ENCODE measurements at regions of chr3 and their contacts with region 1.

Region 1: GRCh38 chr3:44338010-44338827 is at the start of gene TCAIM:
- DNase-seq: peak; percentile 98 to 100 (median 99)
- ATAC-seq: peak; percentile 92
- H3K4me3 ChIP-seq: peak within 1 kb of the TSS; percentile 69
- H3K4me3 Mint-ChIP-seq: peak within 1 kb of the TSS; percentile 93
- H3K27ac ChIP-seq: peak within 1 kb of the TSS; percentile 91 to 92
- H3K27ac Mint-ChIP-seq: peak within 1 kb of the TSS; percentile 95
- H3K4me1 ChIP-seq: peaks cover 17% of the 10 kb centered on the region
- H3K4me1 Mint-ChIP-seq: peaks cover 32% of the 10 kb centered on the region
- H3K27me3 ChIP-seq: no peaks in the 10 kb centered on the region
- H3K27me3 Mint-ChIP-seq: peaks cover 12% of the 10 kb centered on the region
- CTCF ChIP-seq: no peak
- total RNA-seq, gene TCAIM: 2.9 to 4.2 TPM

Region 2: GRCh38 chr3:43621656-43622432 is 716.4 kb before region 1 on chr3 and contains the start of gene ANO10:
- CTCF ChIA-PET with region 1: no interaction called
- POLR2A ChIA-PET with region 1: no interaction called
- intact Hi-C with region 1: loop called in 1 of 2 experiments (anchors 5 kb)
- DNase-seq: peak; percentile 87 to 98 (median 93)
- ATAC-seq: peak; percentile 92
- H3K4me3 ChIP-seq: peak within 1 kb of the TSS; percentile 68
- H3K4me3 Mint-ChIP-seq: peak within 1 kb of the TSS; percentile 90
- H3K27ac ChIP-seq: peak within 1 kb of the TSS in 1 of 2 donors; percentile 23
- H3K27ac Mint-ChIP-seq: peak within 1 kb of the TSS; percentile 82
- H3K4me1 ChIP-seq: peaks cover 16% of the 10 kb centered on the region
- H3K4me1 Mint-ChIP-seq: peaks cover 21% of the 10 kb centered on the region
- H3K27me3 ChIP-seq: no peaks in the 10 kb centered on the region
- H3K27me3 Mint-ChIP-seq: no peaks in the 10 kb centered on the region
- CTCF ChIP-seq: no peak
- total RNA-seq, gene ANO10: 6.9 to 8.0 TPM

Region 3: DNA sequence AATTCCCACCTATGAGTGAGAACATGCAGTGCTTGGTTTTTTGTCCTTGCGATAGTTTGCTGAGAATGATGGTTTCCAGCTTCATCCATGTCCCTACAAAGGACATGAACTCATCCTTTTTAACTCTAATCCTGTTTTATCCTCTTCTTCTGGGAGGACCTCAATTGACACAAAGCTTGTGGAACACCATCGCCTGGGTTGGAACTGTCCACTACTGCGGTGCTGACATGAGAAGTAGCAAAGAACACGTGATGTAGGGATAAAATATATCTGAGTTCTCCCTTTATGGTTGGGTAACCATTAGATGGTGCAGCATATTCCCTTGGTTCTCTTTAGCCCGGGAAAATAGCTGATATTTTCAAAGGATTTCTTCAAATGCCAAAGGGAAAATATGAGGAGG is 201.8 kb before region 1 on chr3:
- CTCF ChIA-PET with region 1: no interaction called
- POLR2A ChIA-PET with region 1: no interaction called
- intact Hi-C with region 1: no loop called
- DNase-seq: no peak
- ATAC-seq: no peak
- H3K4me3 ChIP-seq: no peak overlapping the region
- H3K4me3 Mint-ChIP-seq: no peak overlapping the region
- H3K27ac ChIP-seq: no peak overlapping the region
- H3K27ac Mint-ChIP-seq: no peak overlapping the region
- H3K4me1 ChIP-seq: no peaks in the 10 kb centered on the region
- H3K4me1 Mint-ChIP-seq: no peaks in the 10 kb centered on the region
- H3K27me3 ChIP-seq: peaks cover 0 to 4% of the 10 kb centered on the region in 2 experiments
- H3K27me3 Mint-ChIP-seq: peaks cover 33% of the 10 kb centered on the region
- CTCF ChIP-seq: no peak

Region 4: DNA sequence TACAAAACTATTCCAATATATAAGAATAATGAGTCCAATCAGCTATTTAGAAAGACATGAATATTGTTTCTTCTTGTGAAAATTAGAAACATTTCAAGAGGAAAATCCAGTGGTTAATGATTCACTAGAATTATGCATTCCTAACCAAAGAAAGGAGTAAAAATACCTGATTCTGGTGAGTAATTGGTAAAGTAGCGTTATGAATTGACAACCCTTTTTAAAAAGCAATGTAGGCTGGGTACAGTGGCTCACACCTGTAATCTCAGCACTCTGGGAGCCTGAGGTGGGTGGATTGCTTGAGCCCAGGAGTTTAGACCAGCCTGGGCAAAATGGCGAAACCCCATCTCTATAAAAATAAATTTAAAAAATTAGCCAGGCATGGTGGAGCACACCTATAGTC is 53.3 kb before region 1 on chr3:
- CTCF ChIA-PET with region 1: no interaction called
- POLR2A ChIA-PET with region 1: no interaction called
- intact Hi-C with region 1: no loop called
- DNase-seq: no peak
- ATAC-seq: no peak
- H3K4me3 ChIP-seq: no peak overlapping the region
- H3K4me3 Mint-ChIP-seq: no peak overlapping the region
- H3K27ac ChIP-seq: no peak overlapping the region
- H3K27ac Mint-ChIP-seq: no peak overlapping the region
- H3K4me1 ChIP-seq: no peaks in the 10 kb centered on the region
- H3K4me1 Mint-ChIP-seq: no peaks in the 10 kb centered on the region
- H3K27me3 ChIP-seq: peaks cover 5 to 10% of the 10 kb centered on the region in 2 experiments
- H3K27me3 Mint-ChIP-seq: peaks cover 7% of the 10 kb centered on the region
- CTCF ChIP-seq: no peak

Region 5: GRCh38 chr3:44387404-44387803 is 49.2 kb after region 1 on chr3:
- CTCF ChIA-PET with region 1: no interaction called
- POLR2A ChIA-PET with region 1: no interaction called
- intact Hi-C with region 1: no loop called
- DNase-seq: no peak
- ATAC-seq: no peak
- H3K4me3 ChIP-seq: no peak overlapping the region
- H3K4me3 Mint-ChIP-seq: no peak overlapping the region
- H3K27ac ChIP-seq: no peak overlapping the region
- H3K27ac Mint-ChIP-seq: no peak overlapping the region
- H3K4me1 ChIP-seq: no peaks in the 10 kb centered on the region
- H3K4me1 Mint-ChIP-seq: no peaks in the 10 kb centered on the region
- H3K27me3 ChIP-seq: no peaks in the 10 kb centered on the region
- H3K27me3 Mint-ChIP-seq: no peaks in the 10 kb centered on the region
- CTCF ChIP-seq: no peak

Region 6: DNA sequence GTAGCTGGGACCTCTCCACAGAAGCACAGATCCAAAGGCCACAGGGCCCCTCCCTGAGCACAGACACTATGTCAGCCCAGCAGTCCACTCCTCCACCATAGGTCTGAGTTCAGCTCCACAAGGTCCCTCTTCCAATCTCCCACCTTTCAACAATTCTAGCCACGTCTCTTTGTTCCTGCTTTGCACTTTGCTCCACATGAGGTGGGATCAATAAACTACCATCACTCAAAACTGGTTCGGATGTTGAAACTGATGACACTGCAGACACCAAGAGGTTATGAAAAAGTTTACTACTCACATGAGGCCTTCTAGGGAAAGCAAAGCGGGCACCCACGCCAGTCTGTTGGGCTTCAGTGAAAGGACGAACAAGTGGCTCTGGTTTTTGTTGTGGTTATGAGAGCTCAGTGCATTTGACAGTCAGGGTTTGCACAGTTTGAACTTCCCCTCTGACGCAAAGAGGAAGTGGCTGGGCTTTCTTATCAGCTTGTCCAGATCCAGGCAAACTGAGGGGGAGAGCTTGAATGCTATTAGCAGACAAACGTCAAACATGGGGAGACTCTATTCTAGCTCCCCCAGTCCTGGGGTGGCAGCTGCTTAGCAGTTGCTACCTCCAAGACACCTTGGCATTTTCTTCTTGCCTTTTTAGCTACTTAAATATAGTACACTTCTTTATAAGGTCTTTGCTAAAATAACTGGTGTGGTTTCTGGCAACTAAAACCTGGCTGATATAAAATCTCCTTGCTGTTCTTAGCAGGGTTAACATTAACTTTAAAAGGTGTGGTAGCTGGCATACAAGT is 101.5 kb after region 1 on chr3:
- CTCF ChIA-PET with region 1: interaction called, 3 read pairs
- POLR2A ChIA-PET with region 1: interaction called, 16 read pairs
- intact Hi-C with region 1: no loop called
- DNase-seq: peak; percentile 10 to 88 (median 44)
- ATAC-seq: peak; percentile 81
- H3K4me3 ChIP-seq: no peak overlapping the region
- H3K4me3 Mint-ChIP-seq: peak overlapping the region; percentile 75
- H3K27ac ChIP-seq: peak overlapping the region; percentile 54 to 80
- H3K27ac Mint-ChIP-seq: peak overlapping the region; percentile 84
- H3K4me1 ChIP-seq: peaks cover 30% of the 10 kb centered on the region
- H3K4me1 Mint-ChIP-seq: peaks cover 39% of the 10 kb centered on the region
- H3K27me3 ChIP-seq: no peaks in the 10 kb centered on the region
- H3K27me3 Mint-ChIP-seq: no peaks in the 10 kb centered on the region
- CTCF ChIP-seq: no peak

Region 7: GRCh38 chr3:44510000-44510368 is 171.8 kb after region 1 on chr3:
- CTCF ChIA-PET with region 1: interaction called, 3 read pairs
- POLR2A ChIA-PET with region 1: interaction called, 42 read pairs
- intact Hi-C with region 1: loop called (anchors 2 kb)
- DNase-seq: peak in 4 of 14 experiments; percentile 14 to 44 (median 40)
- ATAC-seq: peak; percentile 25
- H3K4me3 ChIP-seq: peak overlapping the region; percentile 91
- H3K4me3 Mint-ChIP-seq: peak overlapping the region; percentile 100
- H3K27ac ChIP-seq: peak overlapping the region; percentile 74 to 79
- H3K27ac Mint-ChIP-seq: peak overlapping the region; percentile 88
- H3K4me1 ChIP-seq: peaks cover 25% of the 10 kb centered on the region
- H3K4me1 Mint-ChIP-seq: peaks cover 51% of the 10 kb centered on the region
- H3K27me3 ChIP-seq: no peaks in the 10 kb centered on the region
- H3K27me3 Mint-ChIP-seq: no peaks in the 10 kb centered on the region
- CTCF ChIP-seq: no peak

Region 8: GRCh38 chr3:44568561-44568960 is 230.3 kb after region 1 on chr3:
- CTCF ChIA-PET with region 1: no interaction called
- POLR2A ChIA-PET with region 1: no interaction called
- intact Hi-C with region 1: no loop called
- DNase-seq: no peak
- ATAC-seq: no peak
- H3K4me3 ChIP-seq: no peak overlapping the region
- H3K4me3 Mint-ChIP-seq: no peak overlapping the region
- H3K27ac ChIP-seq: no peak overlapping the region
- H3K27ac Mint-ChIP-seq: no peak overlapping the region
- H3K4me1 ChIP-seq: no peaks in the 10 kb centered on the region
- H3K4me1 Mint-ChIP-seq: no peaks in the 10 kb centered on the region
- H3K27me3 ChIP-seq: no peaks in the 10 kb centered on the region
- H3K27me3 Mint-ChIP-seq: no peaks in the 10 kb centered on the region
- CTCF ChIP-seq: no peak

Region 9: GRCh38 chr3:44761424-44762169 is 423.4 kb after region 1 on chr3 and contains the starts of genes KIAA1143 and KIF15:
- CTCF ChIA-PET with region 1: no interaction called
- POLR2A ChIA-PET with region 1: interaction called, 9 read pairs
- intact Hi-C with region 1: loop called in 1 of 2 experiments (anchors 2 kb)
- DNase-seq: peak; percentile 92 to 99 (median 96)
- ATAC-seq: peak; percentile 98
- H3K4me3 ChIP-seq: peak within 1 kb of the TSS; percentile 73
- H3K4me3 Mint-ChIP-seq: peak within 1 kb of the TSS; percentile 99
- H3K27ac ChIP-seq: peak within 1 kb of the TSS; percentile 72 to 76
- H3K27ac Mint-ChIP-seq: peak within 1 kb of the TSS; percentile 94
- H3K4me1 ChIP-seq: peaks cover 16% of the 10 kb centered on the region
- H3K4me1 Mint-ChIP-seq: peaks cover 39% of the 10 kb centered on the region
- H3K27me3 ChIP-seq: no peaks in the 10 kb centered on the region
- H3K27me3 Mint-ChIP-seq: no peaks in the 10 kb centered on the region
- CTCF ChIP-seq: no peak
- total RNA-seq, gene KIAA1143: 24.4 to 31.7 TPM
- total RNA-seq, gene KIF15: 0.08 to 0.11 TPM

Region 10: DNA sequence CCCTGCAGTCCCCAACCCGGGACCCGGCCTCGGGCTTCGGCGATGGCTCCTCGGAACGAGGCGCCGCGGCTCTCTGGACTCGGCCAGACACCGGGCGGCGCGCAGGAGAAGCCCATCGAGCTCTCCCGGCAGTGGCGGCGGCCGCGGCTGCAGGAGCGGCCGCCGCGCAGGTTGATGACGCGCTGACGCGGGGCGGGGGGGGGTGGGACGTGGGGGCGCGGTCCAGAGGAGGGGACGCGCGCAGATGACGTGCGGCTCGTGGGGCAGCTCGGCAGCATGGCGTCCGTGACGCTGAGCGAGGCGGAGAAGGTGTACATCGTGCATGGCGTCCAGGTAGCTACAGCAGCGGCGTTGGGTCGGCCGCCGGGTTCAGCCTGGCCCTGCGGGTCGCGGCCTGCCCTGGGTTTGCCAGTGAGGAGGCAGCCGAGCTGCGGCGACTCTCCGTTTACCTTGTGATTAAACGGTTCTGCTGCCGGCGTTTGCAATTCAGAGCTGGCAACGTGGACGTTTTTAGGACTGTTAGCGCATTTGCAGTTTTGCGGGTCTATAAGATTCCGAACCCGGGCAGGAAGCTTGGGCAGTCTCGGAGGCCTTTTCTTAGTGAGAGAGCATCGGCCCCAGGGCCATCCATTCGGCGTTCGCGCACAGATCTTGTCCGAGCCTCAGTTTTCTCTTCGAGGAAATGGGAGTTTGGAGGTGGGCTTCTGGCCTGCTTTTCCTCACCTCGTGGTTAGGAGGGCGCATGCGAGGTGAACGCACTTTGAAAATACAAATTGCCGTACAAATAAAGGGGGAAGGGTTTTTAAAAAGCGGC is 638.0 kb after region 1 on chr3 and contains the starts of genes EXOSC7 and ZDHHC3:
- CTCF ChIA-PET with region 1: no interaction called
- POLR2A ChIA-PET with region 1: interaction called, 5 read pairs
- intact Hi-C with region 1: loop called in 1 of 2 experiments (anchors 2 kb)
- DNase-seq: peak; percentile 77 to 97 (median 84)
- ATAC-seq: peak; percentile 95
- H3K4me3 ChIP-seq: peak within 1 kb of the TSS; percentile 95
- H3K4me3 Mint-ChIP-seq: peak within 1 kb of the TSS; percentile 98
- H3K27ac ChIP-seq: peak within 1 kb of the TSS; percentile 70 to 89
- H3K27ac Mint-ChIP-seq: peak within 1 kb of the TSS; percentile 94
- H3K4me1 ChIP-seq: peaks cover 48% of the 10 kb centered on the region
- H3K4me1 Mint-ChIP-seq: peaks cover 73% of the 10 kb centered on the region
- H3K27me3 ChIP-seq: no peaks in the 10 kb centered on the region
- H3K27me3 Mint-ChIP-seq: no peaks in the 10 kb centered on the region
- CTCF ChIP-seq: no peak
- total RNA-seq, gene EXOSC7: 28.1 to 28.4 TPM
- total RNA-seq, gene ZDHHC3: 34.4 to 34.6 TPM

Measured in CD4-positive, alpha-beta T cell (primary cell).